Prostate gland (tissue), 2 donors: ENCODE measurements at regions of chr18 and their contacts with region 1.

Region 1: GRCh38 chr18:76620321-76621170 is 125.5 kb upstream of the ZNF516 start:
- DNase-seq: peak; percentile 42
- H3K4me3 ChIP-seq: peak overlapping the region; percentile 6 to 19
- H3K27ac ChIP-seq: peak overlapping the region; percentile 78 to 84
- H3K4me1 ChIP-seq: no peaks in the 10 kb centered on the region
- H3K27me3 ChIP-seq: no peaks in the 10 kb centered on the region
- CTCF ChIP-seq: peak; percentile 21 to 57 (median 48)
- POLR2A ChIP-seq: no peak

Region 2: GRCh38 chr18:76528477-76529432 is 91.8 kb before region 1 on chr18:
- intact Hi-C with region 1: loop called (anchors 2 kb)
- DNase-seq: peak; percentile 25
- H3K4me3 ChIP-seq: peak overlapping the region; percentile 25 to 32
- H3K27ac ChIP-seq: peak overlapping the region; percentile 73 to 74
- H3K4me1 ChIP-seq: no peaks in the 10 kb centered on the region
- H3K27me3 ChIP-seq: no peaks in the 10 kb centered on the region
- CTCF ChIP-seq: no peak
- POLR2A ChIP-seq: no peak

Region 3: GRCh38 chr18:76686737-76687262 is 66.3 kb after region 1 on chr18:
- intact Hi-C with region 1: loop called (anchors 5 kb)
- DNase-seq: peak; percentile 53
- H3K4me3 ChIP-seq: no peak overlapping the region
- H3K27ac ChIP-seq: peak overlapping the region; percentile 16 to 28
- H3K4me1 ChIP-seq: no peaks in the 10 kb centered on the region
- H3K27me3 ChIP-seq: no peaks in the 10 kb centered on the region
- CTCF ChIP-seq: peak; percentile 25 to 75 (median 67)
- POLR2A ChIP-seq: no peak